PC-9 (cell line): ENCODE measurements at regions of chr2 and their contacts with region 1.

Region 1: DNA sequence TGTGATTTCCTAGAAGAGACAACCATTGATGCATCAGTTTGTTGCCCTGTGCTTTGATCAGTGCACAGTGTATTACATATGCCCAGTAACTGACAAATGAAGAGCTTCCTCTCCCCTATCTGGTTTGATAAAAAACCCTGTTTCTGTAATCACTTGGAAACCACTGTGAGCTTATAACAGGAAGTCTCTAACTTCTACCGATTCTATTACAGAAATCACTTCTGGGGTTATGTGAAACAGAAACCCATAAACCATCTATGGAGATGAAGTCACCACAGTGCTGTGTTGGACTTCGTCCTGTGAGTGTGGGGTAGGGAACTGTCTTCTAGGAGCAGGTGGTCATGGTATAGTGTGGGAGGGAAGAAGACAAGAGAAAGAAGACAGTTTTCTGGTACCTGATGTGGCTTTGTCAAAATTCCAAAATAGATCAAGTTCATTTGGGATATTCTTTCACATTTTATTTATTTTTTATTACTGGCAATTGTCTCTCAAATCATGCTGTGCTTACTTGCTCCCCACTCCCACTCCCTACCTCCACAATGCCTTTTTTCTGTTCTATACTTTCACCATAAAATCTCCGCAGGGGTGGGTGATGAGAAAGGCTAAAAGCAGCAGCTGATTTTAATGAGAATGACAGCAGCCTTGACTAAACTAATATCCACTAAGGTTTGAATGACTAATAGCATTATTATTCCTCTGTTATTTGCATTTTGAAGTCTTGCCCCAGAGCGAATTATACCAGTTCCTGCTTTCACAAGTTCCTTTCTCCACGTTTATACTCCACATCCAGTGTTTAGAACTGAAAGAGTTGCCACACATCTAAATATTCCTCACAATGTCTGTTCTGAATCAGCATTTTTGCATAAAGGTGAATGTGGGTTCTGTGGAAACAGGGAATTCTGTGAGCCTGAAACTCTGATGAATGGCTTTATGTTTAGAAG is 41.7 kb upstream of the RND3 start:
- DNase-seq: peak in 1 of 2 experiments; percentile 91
- H3K4me3 ChIP-seq: peak overlapping the region; percentile 33; the same call in 1 of the 2 replicates
- H3K27ac ChIP-seq: peak overlapping the region; percentile 95
- H3K4me1 ChIP-seq: peaks cover 51% of the 10 kb centered on the region
- H3K27me3 ChIP-seq: no peaks in the 10 kb centered on the region
- CTCF ChIP-seq: no peak

Region 2: DNA sequence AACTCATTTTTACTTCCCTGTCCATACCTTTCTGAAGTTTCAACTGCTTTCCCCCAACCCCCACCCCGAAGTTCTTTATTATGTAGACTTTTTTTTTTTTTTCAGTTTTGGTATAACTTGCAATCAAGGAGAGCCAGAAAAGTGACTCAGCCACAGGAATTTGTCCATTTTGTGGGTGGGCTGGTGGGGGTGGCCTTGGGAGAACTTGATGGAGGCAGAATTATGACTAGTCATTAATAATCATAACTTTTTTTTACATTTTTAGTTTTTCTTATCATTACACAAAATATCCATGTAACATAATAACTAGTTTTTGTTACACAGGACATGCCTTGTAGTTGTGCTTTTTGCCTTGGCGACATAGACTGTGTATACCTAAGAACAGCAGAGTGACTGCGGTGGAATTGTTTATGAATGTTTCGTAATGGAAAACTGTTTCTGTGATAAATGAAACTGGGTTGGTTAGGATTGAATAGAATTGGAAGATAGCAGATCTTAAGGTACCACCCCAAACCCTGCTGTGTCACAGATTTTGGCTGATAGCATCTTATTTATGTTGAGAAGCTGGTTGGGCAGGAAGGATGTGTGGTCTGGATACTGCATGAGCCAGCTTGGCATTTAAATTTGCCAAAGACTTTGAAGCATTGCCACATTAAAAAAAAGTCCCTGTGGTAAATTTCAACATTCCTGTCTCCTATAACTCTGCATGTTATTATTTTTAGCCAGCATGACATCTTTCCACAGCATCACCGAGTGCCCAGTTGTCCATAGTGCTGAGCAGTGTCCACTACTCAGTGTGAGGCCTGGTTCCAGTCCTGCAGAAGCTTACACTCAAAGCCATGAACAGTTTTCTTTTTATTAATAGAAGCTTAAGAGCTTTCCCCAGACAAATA is 1459.9 kb before region 1 on chr2:
- CTCF ChIA-PET with region 1: no interaction called
- POLR2A ChIA-PET with region 1: no interaction called
- intact Hi-C with region 1: loop called (anchors 2 kb)
- DNase-seq: peak; percentile 73 to 98
- H3K4me3 ChIP-seq: peak overlapping the region; percentile 38; the same call in 1 of the 2 replicates
- H3K27ac ChIP-seq: peak overlapping the region; percentile 99
- H3K4me1 ChIP-seq: peaks cover 62% of the 10 kb centered on the region
- H3K27me3 ChIP-seq: no peaks in the 10 kb centered on the region
- CTCF ChIP-seq: no peak

Region 3: DNA sequence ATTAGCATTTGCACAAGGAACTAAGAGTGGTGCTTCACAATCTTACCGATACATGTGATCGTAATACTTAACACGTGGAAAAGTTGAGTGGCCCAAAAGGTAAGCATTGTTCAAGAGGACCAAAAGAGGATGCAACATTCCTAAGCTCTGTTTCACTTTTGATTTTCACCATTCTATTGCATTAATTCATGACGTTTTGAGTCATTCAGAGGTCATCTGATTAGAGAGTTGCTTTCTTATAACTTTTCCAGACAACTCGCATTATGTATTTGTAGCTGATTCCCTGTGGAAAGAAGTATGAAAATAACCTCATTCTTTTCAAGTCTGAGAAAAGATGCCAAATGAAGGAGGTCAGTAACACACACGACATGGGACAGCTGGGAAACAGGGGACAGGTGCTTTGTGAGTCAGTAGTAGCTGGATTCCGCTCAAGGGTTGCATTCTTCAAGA is 386.0 kb before region 1 on chr2:
- CTCF ChIA-PET with region 1: no interaction called
- POLR2A ChIA-PET with region 1: no interaction called
- intact Hi-C with region 1: loop called (anchors 5 kb)
- DNase-seq: peak; percentile 22 to 70
- H3K4me3 ChIP-seq: no peak overlapping the region
- H3K27ac ChIP-seq: peak overlapping the region; percentile 94
- H3K4me1 ChIP-seq: peaks cover 22% of the 10 kb centered on the region
- H3K27me3 ChIP-seq: no peaks in the 10 kb centered on the region
- CTCF ChIP-seq: no peak

Region 4: DNA sequence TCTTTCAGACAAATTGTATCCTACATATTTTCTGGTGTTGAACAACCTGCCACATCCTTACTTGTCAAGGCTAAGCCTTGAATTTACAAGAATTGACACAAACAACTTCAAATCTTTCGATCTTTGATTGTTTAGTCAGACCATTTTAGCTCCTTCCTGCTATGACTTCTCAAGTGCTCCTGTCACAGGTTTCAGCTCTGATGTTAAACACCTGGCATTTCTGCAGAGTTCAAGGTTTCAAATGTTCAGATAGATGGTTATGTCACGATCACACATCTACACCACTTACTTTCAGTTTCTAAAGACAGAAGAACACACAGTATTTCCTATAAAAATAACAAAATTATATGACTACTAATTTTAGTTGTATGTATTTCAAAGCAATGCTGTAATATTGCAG is 125.7 kb before region 1 on chr2:
- CTCF ChIA-PET with region 1: no interaction called
- POLR2A ChIA-PET with region 1: interaction called, 19 read pairs
- intact Hi-C with region 1: no loop called
- DNase-seq: no peak
- H3K4me3 ChIP-seq: no peak overlapping the region
- H3K27ac ChIP-seq: no peak overlapping the region
- H3K4me1 ChIP-seq: no peaks in the 10 kb centered on the region
- H3K27me3 ChIP-seq: no peaks in the 10 kb centered on the region
- CTCF ChIP-seq: no peak

Region 5: DNA sequence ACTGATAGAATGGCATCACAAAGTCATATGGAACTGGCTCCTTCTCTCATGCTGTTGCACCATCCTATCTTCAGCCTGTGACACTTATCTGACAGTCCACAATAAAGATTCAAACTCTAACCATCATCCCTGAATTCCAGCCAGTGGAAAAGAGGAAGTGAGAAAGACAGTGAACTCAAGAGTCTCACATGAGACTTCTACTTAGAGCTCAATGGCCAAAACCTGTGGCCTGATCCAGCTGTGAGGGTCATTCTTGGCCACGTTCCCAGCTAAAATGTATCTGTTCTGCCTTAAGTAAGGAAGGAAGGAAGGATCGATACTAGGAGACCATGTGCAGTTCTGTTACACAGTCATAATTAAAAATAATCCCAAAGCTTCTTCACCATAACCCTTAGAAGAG is 115.2 kb before region 1 on chr2:
- CTCF ChIA-PET with region 1: no interaction called
- POLR2A ChIA-PET with region 1: no interaction called
- intact Hi-C with region 1: no loop called
- DNase-seq: no peak
- H3K4me3 ChIP-seq: no peak overlapping the region
- H3K27ac ChIP-seq: no peak overlapping the region
- H3K4me1 ChIP-seq: no peaks in the 10 kb centered on the region
- H3K27me3 ChIP-seq: no peaks in the 10 kb centered on the region
- CTCF ChIP-seq: no peak

Region 6: DNA sequence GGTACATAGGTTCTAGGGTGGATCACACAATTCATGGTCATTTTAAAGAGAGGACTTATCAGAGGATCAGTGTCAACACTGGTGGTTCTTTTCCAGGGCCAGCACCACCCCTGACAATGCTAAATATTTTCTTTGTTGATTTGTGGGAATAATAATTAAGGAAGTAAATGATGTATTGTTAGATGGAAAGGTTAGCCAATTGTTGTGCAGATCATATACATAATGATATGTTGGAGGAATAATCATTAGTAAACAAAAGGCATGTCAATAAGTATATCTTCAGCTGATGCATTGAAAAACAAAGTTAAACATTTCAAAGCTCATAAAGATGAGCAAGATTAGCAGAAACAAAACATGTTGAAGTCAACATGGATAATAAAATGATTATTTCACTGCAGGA is 25.8 kb before region 1 on chr2:
- CTCF ChIA-PET with region 1: no interaction called
- POLR2A ChIA-PET with region 1: no interaction called
- intact Hi-C with region 1: no loop called
- DNase-seq: no peak
- H3K4me3 ChIP-seq: no peak overlapping the region
- H3K27ac ChIP-seq: no peak overlapping the region
- H3K4me1 ChIP-seq: no peaks in the 10 kb centered on the region
- H3K27me3 ChIP-seq: no peaks in the 10 kb centered on the region
- CTCF ChIP-seq: no peak

Region 7: DNA sequence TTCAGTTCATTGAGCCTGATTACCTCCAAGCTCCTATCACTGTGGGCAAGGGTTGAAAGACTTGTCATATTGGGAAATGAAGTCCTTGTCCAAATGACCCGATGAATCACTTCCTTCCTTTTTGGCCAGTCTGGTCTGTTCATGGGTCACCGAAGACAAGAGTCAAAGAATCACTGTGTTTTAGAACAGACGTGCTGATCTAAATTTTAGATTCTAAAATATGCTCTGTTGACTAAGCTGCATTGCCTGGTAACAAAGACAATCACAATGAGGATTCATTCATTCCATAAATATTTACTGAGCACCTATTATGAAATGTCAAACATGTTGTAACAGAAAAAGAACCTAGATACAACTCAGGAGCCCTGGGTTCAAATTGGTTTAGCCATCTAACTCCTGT is 57.7 kb after region 1 on chr2:
- CTCF ChIA-PET with region 1: interaction called, 4 read pairs
- POLR2A ChIA-PET with region 1: no interaction called
- intact Hi-C with region 1: loop called (anchors 2 kb)
- DNase-seq: peak; percentile 12 to 89
- H3K4me3 ChIP-seq: no peak overlapping the region
- H3K27ac ChIP-seq: peak overlapping the region; percentile 46; the same call in 1 of the 2 replicates
- H3K4me1 ChIP-seq: peaks cover 19% of the 10 kb centered on the region
- H3K27me3 ChIP-seq: no peaks in the 10 kb centered on the region
- CTCF ChIP-seq: no peak

Region 8: DNA sequence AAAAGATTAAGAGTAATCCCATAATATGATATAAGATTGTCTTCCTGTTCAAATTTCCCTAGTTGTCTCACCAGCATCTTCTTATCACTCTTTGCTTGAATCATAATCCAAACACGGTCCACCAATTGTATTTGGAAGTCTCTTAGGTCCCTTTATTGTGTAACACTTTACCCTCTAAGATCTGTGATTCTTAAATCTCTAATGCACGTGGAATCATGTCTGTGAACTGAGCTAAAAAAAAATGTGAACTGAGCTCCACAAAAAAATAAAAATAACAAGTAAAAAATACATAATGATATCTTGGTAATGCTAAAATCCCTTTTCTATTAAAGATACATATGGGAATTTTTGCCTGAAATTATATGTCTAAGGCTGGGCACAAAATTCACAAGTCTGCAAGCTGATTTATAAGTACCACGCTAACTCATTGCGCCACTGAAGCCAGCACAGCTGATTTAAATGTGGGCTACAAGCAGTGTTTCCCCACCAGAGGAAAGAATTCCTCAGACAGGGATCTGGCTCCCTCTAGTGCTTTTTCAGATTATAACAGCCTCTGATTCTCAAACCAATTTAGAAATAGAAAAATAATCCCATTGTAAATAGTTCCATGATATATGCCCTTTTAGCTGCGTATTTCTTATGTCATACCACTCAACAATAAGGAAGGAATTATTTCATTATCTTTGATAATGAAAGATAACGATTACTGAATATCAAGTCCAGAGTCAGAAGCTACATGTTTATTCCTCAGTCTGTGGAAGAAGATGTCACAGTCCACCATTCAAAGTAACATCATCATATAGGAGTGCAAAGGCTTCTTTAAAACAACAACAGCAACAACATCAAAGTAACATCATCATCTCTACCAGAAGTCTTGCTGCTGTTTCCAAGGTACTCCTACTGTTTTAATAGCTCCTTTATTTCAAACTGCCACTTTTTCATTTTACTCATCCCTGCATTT is 709.7 kb after region 1 on chr2:
- CTCF ChIA-PET with region 1: no interaction called
- POLR2A ChIA-PET with region 1: no interaction called
- intact Hi-C with region 1: loop called (anchors 2 kb)
- DNase-seq: peak; percentile 43 to 59
- H3K4me3 ChIP-seq: no peak overlapping the region
- H3K27ac ChIP-seq: no peak overlapping the region
- H3K4me1 ChIP-seq: 0 out of 2 replicates have a peak, but pooled peaks cover 4% of the 10 kb centered on the region
- H3K27me3 ChIP-seq: no peaks in the 10 kb centered on the region
- CTCF ChIP-seq: peak; percentile 89